ENCODE measurements at regions of chr18 and their contacts with region 1.

Region 1: DNA sequence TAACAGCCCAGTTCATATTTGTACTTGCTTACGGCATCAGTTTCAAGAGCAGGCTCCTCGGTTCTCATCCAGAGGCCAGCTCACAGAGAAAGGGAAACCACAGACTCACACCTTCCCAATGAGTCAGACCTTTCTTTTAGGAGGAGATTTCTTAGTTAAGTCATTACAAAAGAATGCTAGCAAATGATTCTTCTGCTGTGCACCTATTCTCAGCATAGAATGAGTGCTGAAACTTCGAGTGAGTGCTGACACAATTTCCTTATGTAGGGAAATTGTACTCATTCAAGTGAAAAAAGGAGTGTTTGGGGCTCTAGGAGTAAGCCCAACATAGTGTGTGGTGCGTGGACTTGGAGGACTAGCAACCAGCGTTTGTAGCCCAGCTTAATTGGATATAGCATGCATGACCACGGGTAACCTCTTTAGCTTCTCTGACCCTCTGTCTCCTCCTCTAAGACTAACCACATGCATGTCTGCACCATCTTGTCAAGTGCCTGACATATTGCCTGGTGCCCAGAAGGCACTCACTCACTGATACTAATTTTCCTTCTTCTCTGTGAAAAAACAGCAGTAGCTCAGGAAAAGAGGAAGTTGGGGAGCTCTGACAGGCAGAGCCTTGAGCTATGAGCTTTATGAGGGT is 87.0 kb downstream of the ALPK2 start:
- DNase-seq: peak; percentile 82
- H3K4me3 Mint-ChIP-seq: no peak overlapping the region
- H3K27ac Mint-ChIP-seq: peak overlapping the region; percentile 71
- H3K4me1 Mint-ChIP-seq: peaks cover 66% of the 10 kb centered on the region
- H3K27me3 Mint-ChIP-seq: peaks cover 34% of the 10 kb centered on the region

Region 2: GRCh38 chr18:57943723-57944122 is 598.2 kb before region 1 on chr18:
- intact Hi-C with region 1: no loop called
- DNase-seq: no peak
- H3K4me3 Mint-ChIP-seq: no peak overlapping the region
- H3K27ac Mint-ChIP-seq: no peak overlapping the region
- H3K4me1 Mint-ChIP-seq: no peaks in the 10 kb centered on the region
- H3K27me3 Mint-ChIP-seq: peaks cover 1% of the 10 kb centered on the region

Region 3: DNA sequence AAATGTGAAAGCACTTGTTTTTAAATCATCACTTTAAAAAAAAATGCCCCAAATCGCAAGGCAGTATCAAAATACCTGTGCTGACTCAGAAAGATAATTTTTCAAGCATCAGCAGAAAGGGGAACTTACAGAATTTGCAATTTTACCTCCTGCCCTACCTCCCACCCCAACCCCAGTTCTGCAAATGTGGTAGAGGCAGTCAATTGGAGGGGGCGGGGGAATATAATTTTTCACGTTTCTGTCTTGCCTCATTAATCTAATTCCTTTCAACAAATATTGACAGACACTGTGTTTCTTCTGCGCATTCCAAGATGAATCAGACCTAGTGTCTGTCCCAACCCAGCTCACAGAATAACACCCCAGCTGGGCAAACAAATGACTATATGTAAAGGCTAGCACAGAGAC is 10.2 kb after region 1 on chr18:
- intact Hi-C with region 1: loop called (anchors 1 kb)
- DNase-seq: no peak
- H3K4me3 Mint-ChIP-seq: no peak overlapping the region
- H3K27ac Mint-ChIP-seq: no peak overlapping the region
- H3K4me1 Mint-ChIP-seq: peaks cover 10% of the 10 kb centered on the region
- H3K27me3 Mint-ChIP-seq: no peaks in the 10 kb centered on the region

Region 4: DNA sequence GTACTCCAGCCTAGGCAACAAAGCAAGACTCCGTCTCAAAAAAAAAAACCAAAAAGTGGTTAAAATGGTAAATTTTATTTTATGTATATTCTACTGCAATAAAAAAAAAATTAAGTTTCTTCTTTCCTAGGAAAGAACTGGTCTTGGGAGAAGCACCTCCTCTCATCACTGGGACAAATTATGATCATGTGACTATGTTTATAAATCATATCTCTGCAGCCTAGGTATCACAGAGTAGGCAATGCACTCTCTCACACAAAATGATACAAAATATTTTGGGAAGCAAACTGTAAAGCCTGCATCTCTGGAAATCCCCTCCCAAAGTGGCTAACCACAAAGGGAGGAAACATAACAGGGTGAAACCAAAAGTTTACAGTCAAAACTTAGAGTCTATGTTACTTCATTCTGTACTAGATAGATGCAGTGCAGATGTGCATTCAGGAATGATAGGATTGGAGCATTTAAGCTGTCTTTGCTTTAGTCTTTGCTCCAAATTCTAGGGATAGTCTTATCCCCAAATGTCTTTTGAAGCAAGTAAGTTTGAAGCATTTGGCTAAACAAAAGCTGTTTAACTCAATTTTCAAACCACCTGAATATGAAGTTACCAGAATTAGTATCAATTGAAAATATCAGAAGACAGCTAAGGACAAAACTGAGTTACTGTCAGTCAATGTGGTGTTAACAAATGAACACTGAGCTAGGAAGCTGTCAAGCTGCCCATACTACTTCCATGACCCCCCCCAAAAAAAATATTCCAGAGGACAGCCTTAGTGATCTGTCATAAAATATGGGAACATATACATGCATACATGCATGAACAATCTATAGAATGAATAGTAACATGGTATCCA is 108.3 kb after region 1 on chr18:
- intact Hi-C with region 1: loop called (anchors 1 kb)
- DNase-seq: peak; percentile 92
- H3K4me3 Mint-ChIP-seq: peak overlapping the region; percentile 41
- H3K27ac Mint-ChIP-seq: peak overlapping the region; percentile 42
- H3K4me1 Mint-ChIP-seq: peaks cover 52% of the 10 kb centered on the region
- H3K27me3 Mint-ChIP-seq: peaks cover 3% of the 10 kb centered on the region

Region 5: DNA sequence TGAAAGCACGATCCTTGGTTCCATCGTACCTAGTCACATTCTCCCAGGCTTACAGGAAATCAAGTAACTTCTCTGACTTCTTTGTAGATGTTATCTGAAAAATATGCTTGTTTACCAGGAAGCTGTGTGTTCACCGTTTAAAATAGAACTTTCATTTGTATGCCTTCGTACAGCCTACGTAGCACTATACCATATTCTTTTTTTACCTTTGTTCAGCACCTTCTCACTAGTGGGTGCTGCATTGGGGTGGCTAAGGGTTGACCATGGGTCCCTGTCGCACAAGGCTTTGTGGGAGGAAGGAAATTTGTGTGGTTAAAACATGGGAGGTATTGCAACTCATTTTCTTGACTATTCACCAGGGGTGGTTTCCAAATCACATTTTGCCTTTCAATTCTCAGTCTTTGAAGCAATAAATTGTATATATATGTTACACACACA is 146.0 kb after region 1 on chr18:
- intact Hi-C with region 1: loop called (anchors 1 kb)
- DNase-seq: peak; percentile 91
- H3K4me3 Mint-ChIP-seq: peak overlapping the region; percentile 51
- H3K27ac Mint-ChIP-seq: peak overlapping the region; percentile 92
- H3K4me1 Mint-ChIP-seq: peaks cover 57% of the 10 kb centered on the region
- H3K27me3 Mint-ChIP-seq: no peaks in the 10 kb centered on the region

Region 6: GRCh38 chr18:58863539-58864145 is 321.7 kb after region 1 on chr18:
- intact Hi-C with region 1: no loop called
- DNase-seq: peak; percentile 60
- H3K4me3 Mint-ChIP-seq: peak overlapping the region; percentile 30
- H3K27ac Mint-ChIP-seq: no peak overlapping the region
- H3K4me1 Mint-ChIP-seq: peaks cover 2% of the 10 kb centered on the region
- H3K27me3 Mint-ChIP-seq: peaks cover 76% of the 10 kb centered on the region

Region 7: GRCh38 chr18:59139371-59140298 is 597.7 kb after region 1 on chr18 and contains the start of gene SEC11C:
- intact Hi-C with region 1: loop called (anchors 2 kb)
- DNase-seq: peak; percentile 99
- H3K4me3 Mint-ChIP-seq: peak within 1 kb of the TSS; percentile 97
- H3K27ac Mint-ChIP-seq: peak within 1 kb of the TSS; percentile 98
- H3K4me1 Mint-ChIP-seq: peaks cover 37% of the 10 kb centered on the region
- H3K27me3 Mint-ChIP-seq: peaks cover 27% of the 10 kb centered on the region
- total RNA-seq, gene SEC11C: 125 and 126 TPM in 2 replicates